ENCODE measurements at regions of chr6 and their contacts with region 1.

Region 1: DNA sequence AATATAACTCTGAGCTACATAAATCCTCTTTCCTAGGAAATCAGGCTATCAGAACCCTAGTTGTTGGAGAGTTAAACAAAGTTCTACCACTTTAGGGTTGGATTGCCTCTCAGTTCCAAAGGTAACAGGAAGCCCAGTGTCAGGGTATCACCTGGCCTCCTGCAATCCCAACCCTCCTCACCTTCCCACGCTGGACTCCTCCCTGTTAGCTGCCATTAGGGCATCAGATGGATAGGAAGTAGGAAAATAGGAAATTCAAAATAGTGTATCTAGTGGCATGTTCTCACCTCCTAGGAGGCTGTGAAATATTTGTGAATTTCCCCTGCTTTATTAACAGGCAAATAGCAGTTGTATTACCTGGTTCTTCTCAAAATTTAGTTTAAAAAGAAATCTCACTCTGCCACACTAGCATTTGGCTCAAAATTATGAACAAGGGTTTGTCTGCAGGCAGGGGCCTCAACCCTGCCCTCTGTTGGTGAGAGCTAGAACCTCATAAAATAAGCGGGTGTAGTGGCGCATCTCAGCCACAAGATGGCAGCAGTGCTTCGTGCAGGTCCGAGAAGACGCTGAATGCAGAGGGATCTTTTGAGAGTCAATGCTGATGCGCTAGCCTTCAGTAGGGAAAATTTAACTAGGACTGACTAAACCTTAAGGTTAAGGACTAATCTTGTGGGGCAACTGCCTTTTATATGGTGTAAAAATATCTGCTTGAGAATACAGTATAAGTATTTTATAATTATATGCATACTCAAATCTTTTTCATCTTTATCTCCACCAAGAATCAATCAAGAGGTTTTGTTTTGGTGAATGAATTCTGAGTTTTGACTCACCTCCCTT is 209.8 kb upstream of the KCNQ5 start:
- DNase-seq: peak; percentile 78
- ATAC-seq: peak; percentile 75
- H3K4me3 Mint-ChIP-seq: no peak overlapping the region
- H3K27ac Mint-ChIP-seq: no peak overlapping the region
- H3K4me1 Mint-ChIP-seq: no peaks in the 10 kb centered on the region
- H3K27me3 Mint-ChIP-seq: peaks cover 5% of the 10 kb centered on the region

Region 2: DNA sequence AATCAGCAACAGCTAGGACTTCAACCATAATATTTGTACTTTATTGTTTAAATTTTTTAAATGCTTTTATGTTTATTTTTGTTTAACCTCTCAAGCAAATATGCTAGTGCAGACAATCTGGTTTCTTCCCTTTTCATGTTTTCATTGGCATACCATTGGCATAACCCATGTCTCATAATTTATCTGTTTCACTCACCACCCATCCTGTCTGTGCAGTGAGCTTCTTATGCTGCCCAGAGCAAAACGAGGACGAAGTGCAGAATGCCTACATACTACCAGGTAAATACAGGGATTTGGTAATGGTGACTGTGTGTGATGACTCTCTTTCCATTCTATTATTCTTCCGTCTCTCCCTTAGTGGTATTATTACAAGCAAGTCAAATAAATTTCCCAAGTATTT is 151.6 kb before region 1 on chr6:
- CTCF ChIA-PET with region 1: no interaction called
- POLR2A ChIA-PET with region 1: no interaction called
- DNase-seq: no peak
- ATAC-seq: no peak
- H3K4me3 Mint-ChIP-seq: no peak overlapping the region
- H3K27ac Mint-ChIP-seq: no peak overlapping the region
- H3K4me1 Mint-ChIP-seq: no peaks in the 10 kb centered on the region
- H3K27me3 Mint-ChIP-seq: no peaks in the 10 kb centered on the region

Region 3: GRCh38 chr6:72283571-72283970 is 128.5 kb before region 1 on chr6:
- CTCF ChIA-PET with region 1: no interaction called
- POLR2A ChIA-PET with region 1: no interaction called
- DNase-seq: no peak
- ATAC-seq: no peak
- H3K4me3 Mint-ChIP-seq: no peak overlapping the region
- H3K27ac Mint-ChIP-seq: no peak overlapping the region
- H3K4me1 Mint-ChIP-seq: no peaks in the 10 kb centered on the region
- H3K27me3 Mint-ChIP-seq: no peaks in the 10 kb centered on the region

Region 4: GRCh38 chr6:72425003-72425681 is 13.1 kb after region 1 on chr6:
- CTCF ChIA-PET with region 1: interaction called, 60 read pairs
- POLR2A ChIA-PET with region 1: no interaction called
- DNase-seq: no peak
- ATAC-seq: no peak
- H3K4me3 Mint-ChIP-seq: no peak overlapping the region
- H3K27ac Mint-ChIP-seq: no peak overlapping the region
- H3K4me1 Mint-ChIP-seq: no peaks in the 10 kb centered on the region
- H3K27me3 Mint-ChIP-seq: peaks cover 6% of the 10 kb centered on the region

Region 5: GRCh38 chr6:72446430-72446829 is 34.3 kb after region 1 on chr6:
- CTCF ChIA-PET with region 1: no interaction called
- POLR2A ChIA-PET with region 1: no interaction called
- DNase-seq: no peak
- ATAC-seq: no peak
- H3K4me3 Mint-ChIP-seq: no peak overlapping the region
- H3K27ac Mint-ChIP-seq: no peak overlapping the region
- H3K4me1 Mint-ChIP-seq: no peaks in the 10 kb centered on the region
- H3K27me3 Mint-ChIP-seq: peaks cover 8% of the 10 kb centered on the region

Region 6: DNA sequence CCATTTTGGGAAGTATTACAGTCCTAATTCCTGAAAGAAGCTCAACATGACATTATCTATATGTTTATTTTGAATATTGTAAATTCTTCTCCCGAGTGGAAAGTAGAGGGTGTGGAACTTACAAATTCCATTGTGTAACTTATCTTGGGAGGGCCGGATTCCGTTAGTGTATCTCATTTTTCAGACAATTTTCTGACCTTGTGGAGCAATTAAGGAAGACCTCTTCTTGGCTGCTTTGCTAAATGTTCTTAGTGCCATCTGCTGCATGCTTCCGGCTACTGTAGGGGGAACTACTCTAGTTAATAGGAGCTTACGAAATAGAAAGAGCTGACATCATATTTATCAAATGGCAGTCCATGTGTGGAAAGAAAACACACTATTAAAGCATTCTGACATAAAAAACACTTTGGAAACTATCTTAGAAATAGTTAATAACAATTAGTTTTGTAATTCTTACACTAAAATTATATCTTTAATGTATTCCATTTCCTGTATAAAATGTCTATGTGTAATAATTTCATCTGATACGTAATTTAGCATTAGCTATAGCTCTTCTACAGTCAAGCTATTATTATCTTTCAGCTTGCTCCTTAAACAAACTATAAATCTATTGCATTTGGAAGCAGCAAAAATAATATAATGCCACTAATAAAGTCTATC is 168.3 kb after region 1 on chr6:
- CTCF ChIA-PET with region 1: interaction called, 12 read pairs
- POLR2A ChIA-PET with region 1: no interaction called
- DNase-seq: no peak
- ATAC-seq: no peak
- H3K4me3 Mint-ChIP-seq: no peak overlapping the region
- H3K27ac Mint-ChIP-seq: no peak overlapping the region
- H3K4me1 Mint-ChIP-seq: no peaks in the 10 kb centered on the region
- H3K27me3 Mint-ChIP-seq: peaks cover 11% of the 10 kb centered on the region